ENCODE measurements at regions of chr19 and their contacts with region 1.

Region 1: GRCh38 chr19:55258828-55259539 is at the start of gene PPP6R1:
- DNase-seq: peak; percentile 91 to 97 (median 95)
- H3K4me3 ChIP-seq: peak within 1 kb of the TSS; percentile 89
- H3K4me3 Mint-ChIP-seq: peak within 1 kb of the TSS; percentile 95 to 98 (median 98)
- H3K27ac ChIP-seq: peak within 1 kb of the TSS; percentile 91
- H3K27ac Mint-ChIP-seq: peak within 1 kb of the TSS; percentile 98 to 99 (median 98)
- H3K4me1 ChIP-seq: peaks cover 38% of the 10 kb centered on the region
- H3K4me1 Mint-ChIP-seq: peaks cover 43 to 47% (median 43%) of the 10 kb centered on the region in 3 donors
- H3K27me3 ChIP-seq: no peaks in the 10 kb centered on the region
- H3K27me3 Mint-ChIP-seq: no peaks in the 10 kb centered on the region
- total RNA-seq, gene PPP6R1: 216 to 225 TPM

Region 2: DNA sequence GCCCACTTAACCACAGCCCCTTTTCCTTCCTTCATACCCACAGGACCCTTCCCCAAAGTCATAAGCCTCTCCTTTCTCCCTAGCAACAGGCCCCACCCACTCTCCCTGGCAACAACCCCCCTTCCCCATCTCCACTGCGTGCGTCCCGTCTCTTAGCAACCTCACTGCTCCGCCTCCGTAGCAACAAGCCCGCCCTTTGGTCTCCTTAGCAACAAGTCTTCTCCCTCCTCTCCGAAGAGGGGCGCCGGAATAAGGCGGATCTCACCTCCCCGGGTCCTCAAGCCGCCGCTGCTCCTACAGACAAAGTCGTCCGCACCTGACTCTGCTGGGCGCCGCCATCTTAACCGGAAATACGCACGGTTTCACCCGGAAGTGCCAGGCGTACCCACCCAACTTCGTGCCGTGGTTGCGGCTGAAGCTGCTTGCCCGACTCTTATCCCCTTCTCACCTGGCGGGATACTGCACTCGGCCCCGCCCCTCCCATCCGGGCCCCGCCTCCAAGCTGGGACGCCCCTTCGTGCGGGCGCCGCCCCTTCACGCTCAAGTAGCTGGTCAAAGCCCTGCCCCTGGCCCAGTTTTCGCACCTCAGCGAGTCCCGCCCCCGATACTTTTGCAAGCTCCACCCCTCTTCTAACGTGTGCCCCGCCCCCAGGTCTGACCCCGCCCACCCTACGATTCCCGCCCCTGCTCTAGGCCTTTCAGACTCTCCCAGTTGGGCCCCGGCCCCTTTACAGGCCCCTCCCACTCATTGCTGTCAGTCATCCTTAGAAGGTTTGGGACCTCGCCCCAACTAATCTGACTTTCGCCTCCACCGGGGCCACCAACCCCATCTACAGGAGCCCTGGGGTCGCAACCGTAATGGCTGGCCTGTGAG is 21.0 kb after region 1 on chr19 and contains the start of gene HSPBP1:
- CTCF ChIA-PET with region 1: interaction called, 13 read pairs
- POLR2A ChIA-PET with region 1: interaction called, 33 read pairs
- DNase-seq: peak; percentile 93 to 96 (median 96)
- H3K4me3 ChIP-seq: peak within 1 kb of the TSS; percentile 97
- H3K4me3 Mint-ChIP-seq: peak within 1 kb of the TSS; percentile 89 to 99 (median 99)
- H3K27ac ChIP-seq: peak within 1 kb of the TSS; percentile 83
- H3K27ac Mint-ChIP-seq: peak within 1 kb of the TSS; percentile 85 to 100 (median 99)
- H3K4me1 ChIP-seq: peaks cover 28% of the 10 kb centered on the region
- H3K4me1 Mint-ChIP-seq: peaks cover 46 to 67% (median 54%) of the 10 kb centered on the region in 3 donors
- H3K27me3 ChIP-seq: no peaks in the 10 kb centered on the region
- H3K27me3 Mint-ChIP-seq: peaks cover 0 to 4% of the 10 kb centered on the region in 2 donors
- total RNA-seq, gene HSPBP1: 82.9 to 84.1 TPM

Region 3: GRCh38 chr19:55289117-55289796 is 30.3 kb after region 1 on chr19:
- CTCF ChIA-PET with region 1: interaction called, 16 read pairs
- POLR2A ChIA-PET with region 1: no interaction called
- DNase-seq: no peak
- H3K4me3 ChIP-seq: no peak overlapping the region
- H3K4me3 Mint-ChIP-seq: no peak overlapping the region
- H3K27ac ChIP-seq: no peak overlapping the region
- H3K27ac Mint-ChIP-seq: no peak overlapping the region
- H3K4me1 ChIP-seq: peaks cover 6% of the 10 kb centered on the region
- H3K4me1 Mint-ChIP-seq: peaks cover 4 to 10% (median 10%) of the 10 kb centered on the region in 3 donors
- H3K27me3 ChIP-seq: no peaks in the 10 kb centered on the region
- H3K27me3 Mint-ChIP-seq: peaks cover 0 to 2% of the 10 kb centered on the region in 2 donors

Region 4: GRCh38 chr19:55643348-55644176 is 384.6 kb after region 1 on chr19 and contains the start of gene ZNF581:
- CTCF ChIA-PET with region 1: no interaction called
- POLR2A ChIA-PET with region 1: interaction called, 14 read pairs
- DNase-seq: peak; percentile 65 to 84 (median 72)
- H3K4me3 ChIP-seq: peak within 1 kb of the TSS; percentile 95
- H3K4me3 Mint-ChIP-seq: peak within 1 kb of the TSS; percentile 84 to 98 (median 94)
- H3K27ac ChIP-seq: peak within 1 kb of the TSS; percentile 72
- H3K27ac Mint-ChIP-seq: peak within 1 kb of the TSS; percentile 85 to 98 (median 96)
- H3K4me1 ChIP-seq: peaks cover 34% of the 10 kb centered on the region
- H3K4me1 Mint-ChIP-seq: peaks cover 44 to 63% (median 58%) of the 10 kb centered on the region in 3 donors
- H3K27me3 ChIP-seq: no peaks in the 10 kb centered on the region
- H3K27me3 Mint-ChIP-seq: no peaks in the 10 kb centered on the region
- total RNA-seq, gene ZNF581: 32.8 to 34.4 TPM

Measured in CD8-positive, alpha-beta memory T cell (primary cell).